Prostate gland (tissue), 2 donors: ENCODE measurements at regions of chr16 and their contacts with region 1.

Region 1: DNA sequence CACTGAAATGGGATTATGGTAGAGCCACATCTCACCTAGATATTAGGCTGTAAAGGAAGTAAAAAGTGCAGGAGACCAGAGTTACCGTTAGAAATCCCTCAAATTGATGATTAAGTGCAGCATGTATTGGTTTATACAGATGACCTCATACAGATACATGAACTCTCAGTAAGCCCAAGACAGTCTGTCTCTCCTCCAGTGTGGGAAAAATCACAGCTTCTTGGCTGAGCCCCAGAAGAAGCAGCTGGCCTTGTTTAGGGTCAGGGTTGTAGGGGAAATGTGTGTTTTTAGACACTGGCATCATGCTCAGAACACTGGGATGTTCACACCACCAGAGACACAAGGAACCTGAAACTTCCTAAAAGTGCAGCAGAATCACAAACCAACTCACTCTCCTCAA is 135.9 kb downstream of the KATNIP start:
- DNase-seq: no peak
- H3K4me3 ChIP-seq: no peak overlapping the region
- H3K27ac ChIP-seq: no peak overlapping the region
- H3K4me1 ChIP-seq: no peaks in the 10 kb centered on the region
- H3K27me3 ChIP-seq: no peaks in the 10 kb centered on the region
- CTCF ChIP-seq: no peak
- POLR2A ChIP-seq: no peak

Region 2: GRCh38 chr16:27779641-27780164 is 93.9 kb after region 1 on chr16:
- intact Hi-C with region 1: loop called (anchors 10 kb)
- DNase-seq: peak; percentile 17
- H3K4me3 ChIP-seq: no peak overlapping the region
- H3K27ac ChIP-seq: no peak overlapping the region
- H3K4me1 ChIP-seq: no peaks in the 10 kb centered on the region
- H3K27me3 ChIP-seq: no peaks in the 10 kb centered on the region
- CTCF ChIP-seq: peak in 3 of 4 experiments; percentile 19 to 45 (median 42)
- POLR2A ChIP-seq: no peak